HAP-1 (cell line): ENCODE measurements at regions of chr3 and their contacts with region 1.

Region 1: GRCh38 chr3:4712143-4712542 is 219.0 kb downstream of the ITPR1 start:
- DNase-seq: no peak
- H3K4me3 ChIP-seq: no peak overlapping the region
- H3K4me1 ChIP-seq: no peaks in the 10 kb centered on the region
- H3K27me3 ChIP-seq: no peaks in the 10 kb centered on the region

Region 2: DNA sequence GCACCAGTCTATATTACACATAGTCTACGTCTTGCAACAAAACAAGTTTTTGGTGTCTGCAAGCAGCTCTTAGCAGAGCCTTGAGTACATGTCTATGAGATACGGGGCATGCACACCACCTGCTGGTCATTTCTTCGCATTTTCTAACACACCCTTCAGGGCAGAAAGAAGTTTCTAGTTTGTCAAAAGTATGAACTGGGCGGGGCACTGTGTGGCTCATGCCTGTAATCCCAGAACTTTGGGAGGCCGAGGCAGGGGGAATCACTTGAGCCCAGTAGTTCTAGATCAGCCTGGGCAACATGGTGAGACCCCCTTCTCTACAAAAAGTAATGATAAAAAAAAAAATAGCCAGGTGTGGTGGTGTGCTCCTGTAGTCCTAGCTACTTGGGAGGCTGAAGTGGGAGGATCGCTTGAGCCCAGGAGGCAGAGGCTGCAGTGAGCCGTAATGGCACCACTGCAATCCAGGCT is 345.7 kb after region 1 on chr3:
- in situ Hi-C with region 1: loop called (anchors 10 kb)
- DNase-seq: peak; percentile 78 to 79
- H3K4me3 ChIP-seq: no peak overlapping the region
- H3K4me1 ChIP-seq: no peaks in the 10 kb centered on the region
- H3K27me3 ChIP-seq: no peaks in the 10 kb centered on the region

Region 3: DNA sequence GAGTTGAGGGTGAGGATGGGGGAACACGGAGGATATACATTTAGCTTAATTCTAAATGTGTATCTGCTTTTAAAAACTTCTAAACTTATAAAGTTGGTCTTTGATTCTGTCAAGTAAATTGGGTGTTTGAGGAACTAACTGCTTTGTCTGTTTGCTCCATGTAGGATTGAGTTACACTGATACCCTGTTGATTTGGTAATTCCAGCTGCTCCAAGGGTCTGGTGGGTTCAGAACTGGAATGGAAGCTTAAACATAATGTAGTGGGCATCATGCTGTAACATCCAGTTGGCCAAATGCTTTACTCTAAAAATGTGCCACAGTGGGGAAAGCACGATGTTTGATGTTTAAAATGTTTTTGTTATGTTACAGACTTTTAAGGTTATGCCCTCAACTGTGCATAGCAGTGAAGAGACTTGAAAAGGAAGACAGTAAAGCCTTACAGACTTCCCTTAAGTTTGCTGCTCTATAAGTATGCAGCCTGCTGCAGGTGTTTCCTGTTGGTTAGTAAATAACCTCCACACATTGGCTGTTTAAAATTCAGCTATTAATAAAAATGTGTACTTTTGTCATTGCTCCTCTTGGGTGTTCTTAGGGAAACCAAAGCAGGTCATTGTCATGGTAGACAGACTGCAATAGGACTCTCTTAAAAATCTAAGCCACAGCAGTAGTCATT is 469.5 kb after region 1 on chr3:
- in situ Hi-C with region 1: no loop called
- DNase-seq: no peak
- H3K4me3 ChIP-seq: no peak overlapping the region
- H3K4me1 ChIP-seq: no peaks in the 10 kb centered on the region; the same call in 1 of the 2 replicates
- H3K27me3 ChIP-seq: no peaks in the 10 kb centered on the region